Activated CD8-positive, alpha-beta memory T cell treated with anti-CD3 and anti-CD28 coated beads, Interleukin-2, amount 10 ng/mL, durations not matched to agents 7 days and 5 days (primary cell): ENCODE measurements at regions of chr9 and their contacts with region 1.

Region 1: DNA sequence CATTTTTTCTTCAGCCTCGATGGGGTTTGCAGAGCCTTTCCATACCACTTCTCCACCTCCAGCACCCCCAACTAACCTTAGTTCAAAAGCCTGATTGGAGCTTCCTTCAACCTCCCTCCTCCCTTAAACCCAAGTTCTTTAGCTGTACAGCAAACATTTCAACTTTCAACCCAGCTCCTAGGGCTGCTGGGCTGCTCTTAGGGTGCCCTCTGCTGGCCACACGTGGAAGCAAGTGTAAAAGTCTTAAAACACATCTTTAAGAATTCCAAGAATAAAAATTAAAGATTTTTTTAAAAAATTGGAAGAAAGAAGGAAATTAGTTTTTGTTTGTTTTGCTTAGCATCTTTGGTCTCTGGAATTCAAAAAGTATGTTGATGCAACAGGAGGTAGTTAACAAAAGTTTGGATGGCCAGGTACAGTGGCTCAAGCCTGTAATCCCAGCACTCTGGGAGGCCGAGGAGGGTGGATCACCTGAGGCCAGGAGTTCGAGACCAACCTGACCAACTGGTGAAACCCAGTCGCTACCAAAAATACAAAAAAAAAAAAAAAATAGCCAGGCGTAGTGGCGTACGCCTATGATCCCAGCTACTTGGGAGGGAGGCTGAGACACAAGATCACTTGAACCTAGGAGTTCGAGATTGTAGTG is 15.5 kb upstream of the HSD17B3 start:
- DNase-seq: peak; percentile 67
- ATAC-seq: peak; percentile 66
- H3K4me3 Mint-ChIP-seq: no peak overlapping the region
- H3K27ac Mint-ChIP-seq: no peak overlapping the region
- H3K4me1 Mint-ChIP-seq: no peaks in the 10 kb centered on the region
- H3K27me3 Mint-ChIP-seq: no peaks in the 10 kb centered on the region

Region 2: GRCh38 chr9:96217754-96218693 is 99.4 kb before region 1 on chr9:
- CTCF ChIA-PET with region 1: interaction called, 11 read pairs
- DNase-seq: peak; percentile 79
- ATAC-seq: peak; percentile 94
- H3K4me3 Mint-ChIP-seq: peak overlapping the region; percentile 54
- H3K27ac Mint-ChIP-seq: peak overlapping the region; percentile 61
- H3K4me1 Mint-ChIP-seq: peaks cover 26% of the 10 kb centered on the region
- H3K27me3 Mint-ChIP-seq: peaks cover 77% of the 10 kb centered on the region

Region 3: GRCh38 chr9:96232539-96233241 is 84.8 kb before region 1 on chr9:
- CTCF ChIA-PET with region 1: interaction called, 24 read pairs
- DNase-seq: peak; percentile 48
- ATAC-seq: peak; percentile 78
- H3K4me3 Mint-ChIP-seq: no peak overlapping the region
- H3K27ac Mint-ChIP-seq: no peak overlapping the region
- H3K4me1 Mint-ChIP-seq: no peaks in the 10 kb centered on the region
- H3K27me3 Mint-ChIP-seq: peaks cover 72% of the 10 kb centered on the region

Region 4: GRCh38 chr9:96305171-96305570 is 12.3 kb before region 1 on chr9:
- CTCF ChIA-PET with region 1: interaction called, 11 read pairs
- DNase-seq: no peak
- ATAC-seq: no peak
- H3K4me3 Mint-ChIP-seq: no peak overlapping the region
- H3K27ac Mint-ChIP-seq: no peak overlapping the region
- H3K4me1 Mint-ChIP-seq: no peaks in the 10 kb centered on the region
- H3K27me3 Mint-ChIP-seq: peaks cover 9% of the 10 kb centered on the region

Region 5: DNA sequence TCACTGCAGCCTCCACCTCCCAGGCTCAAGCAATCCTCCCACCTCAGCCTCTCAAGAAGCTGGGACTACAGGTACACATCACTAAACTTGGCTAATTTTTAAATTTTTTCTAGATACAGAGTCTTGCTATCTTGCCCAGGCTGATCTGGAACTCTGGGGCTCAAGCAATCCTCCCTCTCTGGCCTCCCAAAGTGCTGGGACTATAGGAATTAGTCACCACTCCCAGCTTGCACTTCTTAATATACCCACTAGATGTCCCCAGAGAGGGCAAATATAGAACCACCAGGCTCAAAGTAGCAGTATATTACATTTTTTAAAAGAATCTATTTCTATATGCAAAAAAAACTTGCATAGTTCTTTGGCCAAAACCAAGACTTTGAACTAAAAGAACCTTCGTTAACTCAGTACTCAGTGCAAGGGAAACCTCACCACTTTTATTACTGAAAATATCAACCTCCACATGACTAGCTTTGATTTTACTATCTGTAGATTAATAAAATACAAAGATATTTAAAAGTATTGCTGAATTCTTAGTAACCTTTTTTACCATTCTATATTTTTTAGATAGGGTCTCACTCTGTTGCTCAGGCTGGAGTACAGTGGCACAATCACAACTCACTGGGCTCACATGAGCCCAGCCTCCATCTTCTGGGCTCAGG is 10.4 kb after region 1 on chr9:
- CTCF ChIA-PET with region 1: interaction called, 17 read pairs
- DNase-seq: peak; percentile 53
- ATAC-seq: peak; percentile 71
- H3K4me3 Mint-ChIP-seq: no peak overlapping the region
- H3K27ac Mint-ChIP-seq: no peak overlapping the region
- H3K4me1 Mint-ChIP-seq: no peaks in the 10 kb centered on the region
- H3K27me3 Mint-ChIP-seq: no peaks in the 10 kb centered on the region

Region 6: GRCh38 chr9:96462541-96462940 is 145.1 kb after region 1 on chr9:
- CTCF ChIA-PET with region 1: no interaction called
- DNase-seq: no peak
- ATAC-seq: no peak
- H3K4me3 Mint-ChIP-seq: no peak overlapping the region
- H3K27ac Mint-ChIP-seq: no peak overlapping the region
- H3K4me1 Mint-ChIP-seq: peaks cover 7% of the 10 kb centered on the region
- H3K27me3 Mint-ChIP-seq: no peaks in the 10 kb centered on the region